CD8-positive, alpha-beta T cell (primary cell): ENCODE measurements at regions of chr6 and their contacts with region 1.

Region 1: DNA sequence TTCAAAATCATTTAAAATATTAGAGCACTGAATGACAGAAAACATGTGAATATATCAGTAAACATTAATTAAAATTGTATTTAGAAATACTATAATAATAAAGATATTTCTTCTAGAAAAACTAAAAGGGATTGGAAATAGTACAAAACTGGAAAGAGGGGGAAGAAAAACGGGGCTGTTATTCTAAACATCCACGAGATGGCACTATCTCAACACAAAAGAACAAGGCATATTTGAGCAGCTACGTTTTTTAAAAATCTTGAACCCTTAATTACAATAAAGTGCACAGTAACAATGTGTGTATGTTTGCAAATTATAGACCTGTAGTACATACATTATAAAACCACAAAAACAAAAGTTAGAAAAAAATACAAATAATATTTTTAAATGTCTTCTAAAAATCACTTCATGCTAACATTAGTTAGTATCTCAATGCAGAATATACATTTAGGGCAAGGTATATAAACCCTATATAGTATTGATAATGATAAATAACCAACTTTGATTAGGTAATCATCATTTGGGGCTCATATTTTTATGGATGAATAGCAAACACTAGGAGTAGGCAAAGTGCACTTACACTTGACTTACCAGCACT is 42.5 kb upstream of the PNISR start:
- DNase-seq: peak in 2 of 9 experiments; percentile 44 to 58
- ATAC-seq: no peak
- H3K4me3 ChIP-seq: no peak overlapping the region
- H3K4me3 Mint-ChIP-seq: no peak overlapping the region
- H3K27ac ChIP-seq: no peak overlapping the region
- H3K27ac Mint-ChIP-seq: no peak overlapping the region
- H3K4me1 ChIP-seq: no peaks in the 10 kb centered on the region
- H3K4me1 Mint-ChIP-seq: no peaks in the 10 kb centered on the region
- H3K27me3 ChIP-seq: no peaks in the 10 kb centered on the region
- H3K27me3 Mint-ChIP-seq: no peaks in the 10 kb centered on the region
- CTCF ChIP-seq: peak; percentile 97

Region 2: DNA sequence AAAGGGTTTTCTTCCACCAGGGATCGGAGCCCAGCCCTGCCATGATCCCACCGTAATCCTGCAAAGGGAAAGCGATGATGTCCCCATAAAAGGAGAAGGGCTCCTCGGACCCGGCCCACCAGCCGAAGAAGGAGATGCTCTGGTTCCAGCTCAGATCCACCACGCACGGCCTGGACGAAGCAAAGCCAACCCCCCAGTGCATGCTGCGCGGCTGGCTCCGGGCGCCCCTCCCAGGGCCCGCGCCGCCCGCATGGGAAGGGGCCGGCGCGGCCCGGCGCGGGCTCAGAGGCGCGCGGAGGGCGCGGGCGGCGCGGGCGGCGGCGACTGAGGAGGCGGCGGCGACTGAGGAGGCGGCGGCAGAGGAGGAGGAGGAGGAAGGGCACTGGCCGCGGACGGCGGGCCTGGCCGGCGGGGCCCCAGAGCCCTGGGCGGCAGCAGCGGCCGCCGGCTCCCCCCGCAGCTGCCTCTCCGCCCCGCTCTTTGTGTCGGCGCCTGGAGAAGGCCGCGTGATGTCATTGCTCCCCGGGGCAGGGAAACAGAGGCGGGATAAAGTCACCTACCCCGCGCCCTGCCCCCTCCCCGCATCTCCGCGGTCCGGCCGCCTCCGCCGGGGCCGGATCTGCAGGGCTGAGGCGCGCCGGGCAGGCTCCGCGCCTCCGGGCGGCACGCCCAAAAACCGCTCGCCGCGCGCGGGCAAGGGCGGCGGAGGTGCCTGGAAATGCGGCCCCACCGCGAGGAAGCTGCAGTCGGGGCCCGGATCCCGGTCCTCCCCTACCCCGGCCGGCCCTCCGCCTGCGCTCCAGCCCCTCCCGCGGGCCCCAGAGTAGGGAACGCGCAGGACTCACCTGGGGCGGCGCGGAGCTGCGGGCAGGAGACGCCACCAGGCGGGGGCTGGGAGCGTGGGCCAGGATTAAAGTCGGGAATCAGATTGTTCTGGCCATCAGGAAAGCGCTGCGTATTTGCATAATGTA is 118.2 kb before region 1 on chr6 and contains the start of gene FAXC:
- CTCF ChIA-PET with region 1: no interaction called
- POLR2A ChIA-PET with region 1: no interaction called
- intact Hi-C with region 1: no loop called
- DNase-seq: peak in 1 of 9 experiments; percentile 9
- ATAC-seq: no peak
- H3K4me3 ChIP-seq: no peak within 1 kb of the TSS
- H3K4me3 Mint-ChIP-seq: peak within 1 kb of the TSS; percentile 49
- H3K27ac ChIP-seq: no peak within 1 kb of the TSS
- H3K27ac Mint-ChIP-seq: no peak within 1 kb of the TSS
- H3K4me1 ChIP-seq: no peaks in the 10 kb centered on the region
- H3K4me1 Mint-ChIP-seq: peaks cover 5% of the 10 kb centered on the region
- H3K27me3 ChIP-seq: peaks cover 0 to 12% of the 10 kb centered on the region in 2 experiments
- H3K27me3 Mint-ChIP-seq: peaks cover 47% of the 10 kb centered on the region
- CTCF ChIP-seq: no peak
- total RNA-seq, gene FAXC: not detected

Region 3: DNA sequence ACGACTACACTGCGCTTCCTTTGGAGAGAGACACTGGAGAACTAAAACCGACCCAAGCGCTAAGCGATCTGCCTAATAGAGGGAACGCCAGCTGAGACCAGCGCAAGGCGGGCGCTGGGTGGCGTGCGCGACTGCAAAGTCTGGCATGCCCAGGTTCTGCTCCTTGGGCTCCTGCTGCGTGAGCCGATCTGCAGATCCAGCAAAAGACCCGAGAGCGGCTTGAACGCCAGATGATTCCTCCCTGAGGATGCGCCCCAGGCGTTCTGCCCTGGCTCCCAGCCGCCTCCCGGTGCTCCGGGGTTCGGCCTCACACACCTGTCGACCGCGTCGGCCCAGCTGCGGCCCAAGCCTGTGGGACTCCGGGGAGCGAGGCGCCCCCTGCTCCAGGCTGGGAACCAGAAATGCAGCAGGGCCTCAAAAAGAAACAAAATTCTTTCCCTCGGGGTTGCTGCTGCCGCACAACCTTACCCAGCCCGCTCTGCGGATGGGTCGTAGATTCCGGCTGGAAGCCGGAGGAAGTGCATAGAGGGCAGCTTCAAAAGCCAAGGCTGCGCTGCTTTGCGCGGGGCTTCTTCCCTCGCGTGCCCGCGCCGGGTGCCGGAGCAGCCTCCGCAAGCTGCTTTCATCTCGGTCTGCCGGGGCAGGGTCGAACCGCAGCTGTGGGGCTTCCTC is 121.1 kb after region 1 on chr6:
- CTCF ChIA-PET with region 1: no interaction called
- POLR2A ChIA-PET with region 1: no interaction called
- intact Hi-C with region 1: loop called in 1 of 2 experiments (anchors 5 kb)
- DNase-seq: peak in 8 of 9 experiments; percentile 32 to 78 (median 66)
- ATAC-seq: peak; percentile 89
- H3K4me3 ChIP-seq: peak overlapping the region; percentile 53 to 74
- H3K4me3 Mint-ChIP-seq: peak overlapping the region; percentile 89
- H3K27ac ChIP-seq: no peak overlapping the region
- H3K27ac Mint-ChIP-seq: no peak overlapping the region
- H3K4me1 ChIP-seq: peaks cover 18% of the 10 kb centered on the region
- H3K4me1 Mint-ChIP-seq: peaks cover 28% of the 10 kb centered on the region
- H3K27me3 ChIP-seq: peaks cover 22 to 35% of the 10 kb centered on the region in 2 experiments
- H3K27me3 Mint-ChIP-seq: peaks cover 61% of the 10 kb centered on the region
- CTCF ChIP-seq: peak; percentile 50

Region 4: GRCh38 chr6:99761711-99762110 is 294.1 kb after region 1 on chr6:
- CTCF ChIA-PET with region 1: no interaction called
- POLR2A ChIA-PET with region 1: no interaction called
- intact Hi-C with region 1: no loop called
- DNase-seq: no peak
- ATAC-seq: no peak
- H3K4me3 ChIP-seq: no peak overlapping the region
- H3K4me3 Mint-ChIP-seq: no peak overlapping the region
- H3K27ac ChIP-seq: no peak overlapping the region
- H3K27ac Mint-ChIP-seq: no peak overlapping the region
- H3K4me1 ChIP-seq: no peaks in the 10 kb centered on the region
- H3K4me1 Mint-ChIP-seq: no peaks in the 10 kb centered on the region
- H3K27me3 ChIP-seq: no peaks in the 10 kb centered on the region
- H3K27me3 Mint-ChIP-seq: peaks cover 5% of the 10 kb centered on the region
- CTCF ChIP-seq: no peak

Region 5: DNA sequence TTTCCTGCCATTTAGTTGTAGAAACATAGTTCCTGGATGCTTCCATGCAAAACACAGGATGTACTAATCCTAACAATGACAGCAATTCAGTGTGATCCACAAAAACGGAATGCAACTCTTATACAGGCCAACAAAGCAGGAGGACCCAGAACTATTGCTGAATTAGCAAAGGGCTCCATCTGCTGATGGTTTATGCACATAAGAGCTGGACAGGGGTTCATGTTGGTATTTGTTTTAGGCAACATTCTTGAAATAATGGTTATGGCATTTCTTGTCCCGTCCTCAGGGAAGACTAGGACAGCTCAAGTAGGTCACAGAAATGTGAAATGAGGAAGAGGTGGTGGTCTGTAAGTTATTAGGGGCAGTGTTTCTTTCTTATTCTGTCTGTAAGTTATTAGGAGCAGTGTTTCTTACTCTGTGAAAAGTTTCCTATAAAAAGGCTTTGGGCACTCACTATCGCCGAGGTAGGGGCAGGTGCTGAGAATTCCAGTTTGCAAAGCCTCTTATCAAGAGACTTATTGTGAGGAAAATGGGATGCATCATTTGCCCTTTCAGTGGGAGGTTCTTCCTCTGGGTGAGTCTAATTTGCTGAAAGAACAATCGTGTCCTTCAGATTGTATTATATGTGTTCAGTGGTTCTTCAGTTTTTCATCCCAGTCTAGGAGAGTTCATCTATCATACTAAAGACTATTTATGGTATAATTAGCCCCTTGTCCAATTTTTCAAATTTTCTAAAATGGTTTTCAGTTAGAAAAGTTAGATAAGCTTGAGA is 355.3 kb after region 1 on chr6:
- CTCF ChIA-PET with region 1: interaction called, 4 read pairs
- POLR2A ChIA-PET with region 1: no interaction called
- intact Hi-C with region 1: loop called (anchors 5 kb)
- DNase-seq: peak in 2 of 9 experiments; percentile 43 to 53
- ATAC-seq: peak; percentile 34
- H3K4me3 ChIP-seq: no peak overlapping the region
- H3K4me3 Mint-ChIP-seq: peak overlapping the region; percentile 50
- H3K27ac ChIP-seq: no peak overlapping the region
- H3K27ac Mint-ChIP-seq: no peak overlapping the region
- H3K4me1 ChIP-seq: no peaks in the 10 kb centered on the region
- H3K4me1 Mint-ChIP-seq: peaks cover 7% of the 10 kb centered on the region
- H3K27me3 ChIP-seq: peaks cover 4% of the 10 kb centered on the region in 2 experiments
- H3K27me3 Mint-ChIP-seq: peaks cover 31% of the 10 kb centered on the region
- CTCF ChIP-seq: no peak

Region 6: DNA sequence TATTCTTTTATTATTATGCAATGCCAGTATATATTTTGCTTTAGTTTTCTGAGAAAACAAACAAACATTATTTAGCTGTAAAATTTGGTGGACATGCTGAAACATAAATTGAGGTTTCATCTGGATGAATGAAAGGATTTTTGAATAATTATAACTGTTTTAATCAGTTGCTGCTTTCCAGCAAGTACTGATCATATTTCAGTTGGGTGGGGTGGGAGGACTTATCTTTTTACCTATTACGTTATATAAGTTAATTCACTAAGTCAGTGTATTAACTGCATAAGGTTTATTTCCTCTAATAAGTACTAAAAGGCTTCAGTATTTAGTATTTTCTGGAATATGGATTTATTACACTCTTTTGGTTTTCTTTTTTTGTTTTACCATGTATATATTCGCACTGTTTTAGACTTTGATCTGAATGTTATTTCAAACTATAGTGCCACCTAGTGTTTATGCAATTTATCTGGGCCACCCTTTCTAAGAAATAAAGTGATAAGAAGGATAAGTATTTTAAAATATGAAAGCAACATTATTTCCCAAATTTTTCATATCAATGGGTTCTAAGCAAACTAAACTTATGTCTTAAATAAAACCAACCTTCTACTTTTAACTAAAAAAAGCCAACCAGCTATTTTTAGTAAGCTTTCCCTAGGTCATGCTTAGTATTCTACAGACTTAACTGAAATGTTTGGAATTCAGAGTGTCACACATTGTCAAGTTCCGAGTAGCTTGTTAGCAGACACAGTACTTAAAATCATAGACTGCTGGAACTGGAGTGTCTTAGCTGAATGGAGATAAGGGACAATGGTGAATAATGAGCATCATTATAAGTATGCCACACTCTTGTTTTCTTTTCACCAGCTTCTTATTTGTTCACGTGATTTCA is 631.8 kb after region 1 on chr6:
- CTCF ChIA-PET with region 1: no interaction called
- POLR2A ChIA-PET with region 1: no interaction called
- intact Hi-C with region 1: loop called (anchors 5 kb)
- DNase-seq: peak in 1 of 9 experiments; percentile 17
- ATAC-seq: no peak
- H3K4me3 ChIP-seq: no peak overlapping the region
- H3K4me3 Mint-ChIP-seq: no peak overlapping the region
- H3K27ac ChIP-seq: no peak overlapping the region
- H3K27ac Mint-ChIP-seq: no peak overlapping the region
- H3K4me1 ChIP-seq: no peaks in the 10 kb centered on the region
- H3K4me1 Mint-ChIP-seq: no peaks in the 10 kb centered on the region
- H3K27me3 ChIP-seq: no peaks in the 10 kb centered on the region
- H3K27me3 Mint-ChIP-seq: peaks cover 4% of the 10 kb centered on the region
- CTCF ChIP-seq: peak; percentile 12

Region 7: GRCh38 chr6:100664274-100665040 is 1196.8 kb after region 1 on chr6:
- CTCF ChIA-PET with region 1: no interaction called
- POLR2A ChIA-PET with region 1: no interaction called
- intact Hi-C with region 1: loop called in 1 of 2 experiments (anchors 5 kb)
- DNase-seq: peak in 2 of 9 experiments; percentile 33 to 52
- ATAC-seq: peak; percentile 34
- H3K4me3 ChIP-seq: no peak overlapping the region
- H3K4me3 Mint-ChIP-seq: no peak overlapping the region
- H3K27ac ChIP-seq: peak overlapping the region in 1 of 2 experiments; percentile 37
- H3K27ac Mint-ChIP-seq: peak overlapping the region; percentile 83
- H3K4me1 ChIP-seq: no peaks in the 10 kb centered on the region
- H3K4me1 Mint-ChIP-seq: peaks cover 10% of the 10 kb centered on the region
- H3K27me3 ChIP-seq: no peaks in the 10 kb centered on the region
- H3K27me3 Mint-ChIP-seq: no peaks in the 10 kb centered on the region
- CTCF ChIP-seq: peak; percentile 79